HEK293 (cell line): ENCODE measurements at regions of chrX and their contacts with region 1.

Region 1: GRCh38 chrX:40651620-40652223 is 4.4 kb upstream of the CXorf38 start:
- H3K4me3 ChIP-seq: no peak overlapping the region
- H3K27ac ChIP-seq: no peak overlapping the region
- H3K4me1 ChIP-seq: peaks cover 4% of the 10 kb centered on the region; the same call in 1 of the 2 replicates
- CTCF ChIP-seq: no peak

Region 2: GRCh38 chrX:40543661-40544328 is 107.9 kb before region 1 on chrX:
- CTCF ChIA-PET with region 1: interaction called, 33 read pairs
- POLR2A ChIA-PET with region 1: interaction called, 4 read pairs
- H3K4me3 ChIP-seq: no peak overlapping the region
- H3K27ac ChIP-seq: no peak overlapping the region
- H3K4me1 ChIP-seq: peaks cover 2% of the 10 kb centered on the region
- CTCF ChIP-seq: 0 out of 2 replicates have a peak, but pooled peaks have one; percentile 31

Region 3: GRCh38 chrX:40671126-40671525 is 19.4 kb after region 1 on chrX:
- CTCF ChIA-PET with region 1: interaction called, 54 read pairs
- POLR2A ChIA-PET with region 1: no interaction called
- H3K4me3 ChIP-seq: no peak overlapping the region
- H3K27ac ChIP-seq: no peak overlapping the region
- H3K4me1 ChIP-seq: no peaks in the 10 kb centered on the region
- CTCF ChIP-seq: no peak

Region 4: GRCh38 chrX:40784516-40785151 is 132.9 kb after region 1 on chrX:
- CTCF ChIA-PET with region 1: interaction called, 15 read pairs
- POLR2A ChIA-PET with region 1: no interaction called
- H3K4me3 ChIP-seq: no peak overlapping the region
- H3K27ac ChIP-seq: no peak overlapping the region
- H3K4me1 ChIP-seq: no peaks in the 10 kb centered on the region
- CTCF ChIP-seq: no peak

Region 5: DNA sequence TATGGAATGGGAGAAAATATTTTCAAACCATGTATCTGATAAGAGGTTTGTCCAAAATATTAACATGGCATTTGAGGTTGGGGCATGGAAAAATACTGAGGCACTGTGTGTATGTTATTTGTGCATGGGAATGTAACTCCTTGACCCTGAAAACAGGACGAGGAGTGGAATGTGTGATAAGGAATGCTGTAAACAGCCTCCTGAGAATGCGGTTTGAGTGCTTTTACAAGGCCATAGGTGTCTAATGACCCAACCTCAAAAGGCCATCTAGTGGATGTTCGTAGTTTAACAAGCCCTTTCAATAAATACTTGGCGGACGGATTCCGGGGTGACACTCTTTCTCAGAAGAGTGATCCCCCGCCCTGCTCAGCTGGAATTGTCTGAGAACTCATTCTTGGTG is 270.6 kb after region 1 on chrX:
- CTCF ChIA-PET with region 1: interaction called, 10 read pairs
- POLR2A ChIA-PET with region 1: no interaction called
- H3K4me3 ChIP-seq: no peak overlapping the region
- H3K27ac ChIP-seq: no peak overlapping the region
- H3K4me1 ChIP-seq: no peaks in the 10 kb centered on the region
- CTCF ChIP-seq: no peak

Region 6: DNA sequence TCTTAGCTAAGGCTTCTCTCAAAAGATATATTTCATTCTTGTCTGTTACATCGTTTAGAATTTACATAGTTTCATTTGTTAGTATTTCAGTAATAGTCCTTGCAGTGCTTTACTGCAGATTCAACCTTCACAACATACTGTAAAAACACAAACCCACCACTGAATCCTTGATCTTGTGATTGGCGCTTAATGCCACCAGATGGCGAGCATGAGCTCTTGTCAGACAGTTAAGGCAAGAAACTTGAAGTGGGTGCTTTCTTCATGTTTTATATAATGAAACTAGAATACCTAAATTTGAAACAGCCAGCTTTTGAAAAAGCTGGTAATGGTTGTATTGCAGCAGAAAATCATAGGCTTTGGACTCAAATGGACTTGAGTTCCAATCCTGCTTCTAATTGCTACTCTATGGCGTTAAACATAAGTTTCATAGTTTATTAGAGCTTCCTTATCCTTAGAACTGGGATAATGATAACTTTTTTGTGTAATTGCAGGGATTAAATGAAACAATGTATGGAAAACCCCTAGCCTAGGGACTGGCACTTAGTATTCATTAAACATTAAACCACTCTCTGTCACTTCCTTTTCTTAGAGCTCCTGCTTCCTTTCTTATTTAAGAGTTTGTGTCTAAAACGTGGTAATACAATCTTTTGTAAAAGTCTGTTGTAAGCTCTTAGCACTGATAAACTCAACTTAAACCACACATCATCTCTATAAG is 528.6 kb after region 1 on chrX:
- CTCF ChIA-PET with region 1: interaction called, 16 read pairs
- POLR2A ChIA-PET with region 1: no interaction called
- H3K4me3 ChIP-seq: no peak overlapping the region
- H3K27ac ChIP-seq: no peak overlapping the region
- H3K4me1 ChIP-seq: no peaks in the 10 kb centered on the region
- CTCF ChIP-seq: no peak